OCI-LY7 (cell line): ENCODE measurements at regions of chr6 and their contacts with region 1.

Region 1: GRCh38 chr6:28940858-28941680 is 17.3 kb upstream of the TRIM27 start:
- DNase-seq: peak; percentile 57
- H3K4me3 ChIP-seq: peak overlapping the region; percentile 48
- H3K27ac ChIP-seq: no peak overlapping the region
- H3K4me1 ChIP-seq: peaks cover 35% of the 10 kb centered on the region
- CTCF ChIP-seq: no peak

Region 2: DNA sequence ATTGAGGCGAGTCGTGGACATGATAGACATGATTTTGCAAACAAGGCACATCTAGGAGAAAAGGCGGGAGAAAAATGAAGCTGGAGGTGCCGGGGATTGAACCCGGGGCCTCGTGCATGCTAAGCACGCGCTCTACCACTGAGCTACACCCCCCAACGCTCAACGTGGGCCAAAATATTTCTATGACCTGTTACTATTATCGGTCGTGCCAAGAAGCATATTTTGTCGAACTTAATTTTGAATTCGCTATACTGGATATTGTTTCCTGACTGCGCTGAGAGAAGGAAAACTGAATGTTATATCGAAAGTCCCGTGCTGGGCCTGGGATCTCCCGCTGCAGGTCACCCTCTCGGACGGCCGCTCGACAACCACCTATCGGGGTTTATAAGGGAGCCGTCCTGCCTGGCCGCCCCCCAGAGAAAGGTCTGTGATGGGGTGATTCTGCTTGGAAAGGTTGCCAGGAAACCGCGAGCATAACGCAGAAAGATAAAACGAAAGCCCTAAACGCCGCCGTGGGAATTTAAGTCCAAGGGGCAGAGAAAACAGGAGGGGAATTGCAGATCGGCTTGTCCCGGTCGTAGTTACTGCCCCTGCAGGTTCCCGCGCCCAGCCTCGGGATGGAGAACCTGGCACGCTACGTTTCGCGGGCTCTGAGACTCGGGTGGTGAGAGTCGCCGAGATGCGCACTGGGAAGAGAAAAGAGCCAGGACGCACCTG is 77.3 kb before region 1 on chr6:
- CTCF ChIA-PET with region 1: no interaction called
- POLR2A ChIA-PET with region 1: interaction called, 4 read pairs
- intact Hi-C with region 1: loop called (anchors 5 kb)
- DNase-seq: peak; percentile 79
- H3K4me3 ChIP-seq: peak overlapping the region; percentile 80
- H3K27ac ChIP-seq: peak overlapping the region; percentile 37
- H3K4me1 ChIP-seq: peaks cover 37% of the 10 kb centered on the region
- CTCF ChIP-seq: no peak

Region 3: GRCh38 chr6:28895134-28895812 is 45.8 kb before region 1 on chr6:
- CTCF ChIA-PET with region 1: no interaction called
- POLR2A ChIA-PET with region 1: no interaction called
- intact Hi-C with region 1: loop called (anchors 1 kb)
- DNase-seq: peak; percentile 97
- H3K4me3 ChIP-seq: peak overlapping the region; percentile 92
- H3K27ac ChIP-seq: peak overlapping the region; percentile 92
- H3K4me1 ChIP-seq: peaks cover 18% of the 10 kb centered on the region
- CTCF ChIP-seq: no peak

Region 4: DNA sequence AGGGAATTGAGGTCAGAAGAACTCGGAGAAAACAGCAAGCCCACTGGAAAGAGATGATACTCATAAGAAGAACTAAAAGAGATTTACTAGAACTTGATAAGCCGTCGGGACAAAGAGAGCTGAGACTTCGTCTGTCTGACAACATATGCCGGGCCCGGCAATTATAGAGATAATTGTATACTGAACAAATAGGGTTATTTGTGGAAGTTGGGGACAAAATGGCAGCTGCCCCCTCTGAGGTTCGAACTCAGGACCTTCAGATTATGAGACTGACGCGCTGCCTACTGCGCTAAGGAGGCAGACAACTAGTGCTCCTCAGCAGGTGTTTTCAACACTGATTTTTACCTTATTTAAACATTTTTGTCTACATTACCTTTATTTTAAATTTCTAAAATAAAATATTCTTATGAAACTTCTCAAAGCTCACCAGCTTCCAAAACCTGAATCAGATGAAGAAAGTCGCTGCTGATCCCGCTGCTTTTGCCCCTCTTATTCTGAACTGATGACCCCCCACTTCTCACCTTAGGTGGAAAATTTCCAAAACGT is 12.0 kb after region 1 on chr6:
- CTCF ChIA-PET with region 1: no interaction called
- POLR2A ChIA-PET with region 1: no interaction called
- intact Hi-C with region 1: loop called (anchors 1 kb)
- DNase-seq: peak; percentile 74
- H3K4me3 ChIP-seq: peak overlapping the region; percentile 65
- H3K27ac ChIP-seq: no peak overlapping the region
- H3K4me1 ChIP-seq: peaks cover 18% of the 10 kb centered on the region
- CTCF ChIP-seq: no peak

Region 5: DNA sequence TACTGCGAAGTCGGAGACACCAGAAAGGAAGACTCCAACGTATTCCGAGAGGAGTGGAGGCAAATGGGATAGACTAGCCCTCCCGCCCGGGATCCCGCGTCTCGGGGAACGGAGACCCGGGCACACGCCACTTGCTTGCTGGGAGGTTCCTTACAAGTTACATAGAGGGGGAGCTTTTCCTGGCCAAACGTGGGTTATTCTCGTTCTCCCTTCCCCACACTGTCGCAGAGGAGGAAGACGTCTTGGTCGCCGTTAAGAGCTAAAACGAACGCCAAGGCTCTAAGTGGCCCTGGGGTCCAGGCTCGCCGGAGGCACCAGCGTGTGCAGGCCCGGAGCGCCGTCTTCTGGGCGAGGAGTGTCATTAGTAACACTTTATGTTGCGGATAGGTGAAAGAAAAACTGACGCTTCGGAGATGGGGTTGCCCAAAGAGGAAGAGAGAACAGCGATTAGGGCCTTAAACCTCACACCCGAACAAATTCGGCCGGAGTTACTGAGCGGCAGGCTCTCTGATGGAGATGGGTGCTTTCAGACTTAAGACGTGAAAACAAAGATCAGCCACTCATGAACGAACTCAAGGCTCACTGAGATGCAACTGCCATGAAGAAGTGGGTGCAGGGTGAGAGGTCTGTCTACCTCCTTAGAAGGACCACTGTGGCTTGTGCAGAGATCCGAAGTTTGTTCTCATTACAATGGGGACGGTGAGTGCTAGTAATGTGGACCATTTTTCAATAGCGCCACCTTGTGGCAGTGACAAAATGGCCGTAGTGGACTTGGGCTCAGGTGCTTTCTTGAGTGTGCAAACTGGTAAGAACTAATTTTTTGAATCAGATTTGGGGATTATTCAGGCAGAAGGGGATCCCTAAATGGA is 75.7 kb after region 1 on chr6:
- CTCF ChIA-PET with region 1: no interaction called
- POLR2A ChIA-PET with region 1: no interaction called
- intact Hi-C with region 1: loop called (anchors 2 kb)
- DNase-seq: peak; percentile 90
- H3K4me3 ChIP-seq: peak overlapping the region; percentile 67
- H3K27ac ChIP-seq: peak overlapping the region; percentile 56
- H3K4me1 ChIP-seq: no peaks in the 10 kb centered on the region
- CTCF ChIP-seq: peak; percentile 97